ENCODE measurements at regions of chr5 and their contacts with region 1.

Region 1: DNA sequence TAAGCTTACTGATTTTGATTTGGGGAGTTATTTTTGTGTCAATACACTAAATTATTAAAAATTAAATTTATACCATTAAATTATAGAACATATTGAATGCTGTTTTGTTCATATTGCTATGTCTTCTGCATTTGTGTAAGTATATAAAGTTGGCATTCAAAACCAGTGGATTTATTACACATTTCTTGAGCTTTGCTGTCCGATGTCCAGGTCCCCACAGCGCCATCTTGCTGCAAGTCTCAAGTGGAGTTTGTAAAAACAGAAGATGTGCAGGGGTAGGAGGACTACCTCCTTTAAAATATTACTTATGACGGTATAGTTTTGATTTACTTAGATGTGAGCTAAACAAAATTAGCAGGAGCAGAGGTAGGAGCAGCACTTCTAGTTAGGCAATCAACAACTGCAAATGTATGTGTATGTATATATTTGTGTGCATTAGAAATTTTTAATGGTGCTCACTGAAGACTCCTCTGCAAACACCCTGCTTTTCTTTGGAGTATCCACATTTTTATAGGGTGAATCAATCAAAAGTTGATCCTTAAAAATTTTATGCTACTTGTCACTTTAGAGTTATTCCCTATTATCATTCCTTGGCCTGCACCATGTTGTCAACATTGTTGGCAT is 37.4 kb downstream of the CPEB4 start:
- DNase-seq: peak; percentile 31
- ATAC-seq: no peak
- H3K4me3 Mint-ChIP-seq: no peak overlapping the region
- H3K27ac Mint-ChIP-seq: no peak overlapping the region
- H3K4me1 Mint-ChIP-seq: peaks cover 25% of the 10 kb centered on the region
- H3K27me3 Mint-ChIP-seq: no peaks in the 10 kb centered on the region
- CTCF ChIP-seq: no peak

Region 2: GRCh38 chr5:173707392-173707791 is 218.2 kb before region 1 on chr5:
- CTCF ChIA-PET with region 1: no interaction called
- POLR2A ChIA-PET with region 1: no interaction called
- DNase-seq: no peak
- ATAC-seq: no peak
- H3K4me3 Mint-ChIP-seq: no peak overlapping the region
- H3K27ac Mint-ChIP-seq: 0 out of 2 replicates have a peak overlapping the region, but pooled peaks have one; percentile 17
- H3K4me1 Mint-ChIP-seq: peaks cover 19% of the 10 kb centered on the region
- H3K27me3 Mint-ChIP-seq: no peaks in the 10 kb centered on the region; the same call in 1 of the 2 replicates
- CTCF ChIP-seq: no peak

Region 3: DNA sequence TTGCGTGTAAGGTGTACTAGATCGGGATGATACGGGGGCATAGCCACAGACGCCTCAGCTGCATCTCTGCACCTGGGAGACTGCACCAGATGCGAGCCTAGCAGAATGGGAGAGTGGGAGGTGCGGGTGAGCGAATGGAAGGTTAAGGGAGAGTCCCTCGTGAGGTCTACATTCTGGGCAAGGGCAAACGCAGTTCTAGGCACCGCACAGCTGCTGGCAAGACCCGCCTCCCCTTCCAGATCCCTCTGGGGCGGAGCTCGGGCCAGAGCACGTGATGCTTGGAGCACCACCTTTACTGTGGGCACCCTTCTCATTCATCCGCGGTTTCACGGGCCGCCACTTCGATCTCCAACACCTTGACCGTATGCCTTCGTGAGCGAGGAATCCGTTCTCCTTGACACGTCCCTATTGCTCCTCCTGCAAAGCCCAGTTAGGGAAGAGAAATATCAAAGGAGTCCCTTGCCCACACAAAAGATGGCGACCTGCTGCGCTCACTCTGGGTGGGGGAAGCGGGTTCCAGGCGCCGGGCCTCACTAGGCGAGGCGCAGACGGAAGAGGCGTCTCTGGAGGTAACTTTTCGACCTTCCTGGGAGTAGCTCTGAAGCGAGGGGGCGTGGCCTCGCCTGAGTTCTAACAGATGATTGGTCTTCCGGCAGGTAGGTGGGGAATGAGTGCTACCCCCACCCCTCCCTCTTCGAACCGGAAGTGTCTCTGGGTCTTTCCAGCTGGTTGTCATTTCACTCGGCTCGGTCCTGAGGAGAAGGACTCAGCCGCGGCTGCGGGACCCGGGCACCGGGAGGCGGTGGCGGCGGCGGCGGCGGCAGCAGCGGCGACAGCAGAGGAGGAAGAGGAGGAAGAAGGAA is 37.7 kb before region 1 on chr5 and contains the start of gene CPEB4:
- CTCF ChIA-PET with region 1: interaction called, 19 read pairs
- POLR2A ChIA-PET with region 1: no interaction called
- DNase-seq: peak; percentile 98
- ATAC-seq: peak; percentile 96
- H3K4me3 Mint-ChIP-seq: peak within 1 kb of the TSS; percentile 94
- H3K27ac Mint-ChIP-seq: peak within 1 kb of the TSS; percentile 100
- H3K4me1 Mint-ChIP-seq: peaks cover 53% of the 10 kb centered on the region
- H3K27me3 Mint-ChIP-seq: peaks cover 3% of the 10 kb centered on the region; the same call in 1 of the 2 replicates
- CTCF ChIP-seq: no peak
- total RNA-seq, gene CPEB4: 9.1 to 12.7 TPM (median 9.2 TPM) in 3 replicates

Region 4: DNA sequence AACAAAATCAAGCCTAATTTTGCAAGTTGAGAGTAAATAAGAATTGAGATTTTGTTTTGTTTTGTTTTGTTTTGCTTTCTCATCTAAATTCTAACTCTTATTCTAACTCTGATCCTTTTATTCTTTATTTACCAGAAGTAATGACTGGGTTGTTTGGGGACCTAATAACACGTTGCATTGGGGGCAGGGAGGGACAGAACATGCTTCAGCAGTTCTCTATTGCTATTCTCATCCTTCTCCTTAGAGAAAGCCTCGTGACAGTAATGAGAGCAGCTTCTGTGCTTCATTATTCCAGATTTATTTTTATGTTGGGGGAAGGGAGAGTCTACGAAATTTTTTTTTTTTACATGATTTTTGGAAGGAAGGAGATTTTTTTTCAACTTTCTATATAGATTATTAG is 16.4 kb before region 1 on chr5:
- CTCF ChIA-PET with region 1: interaction called, 16 read pairs
- POLR2A ChIA-PET with region 1: no interaction called
- DNase-seq: no peak
- ATAC-seq: no peak
- H3K4me3 Mint-ChIP-seq: no peak overlapping the region
- H3K27ac Mint-ChIP-seq: peak overlapping the region; percentile 67
- H3K4me1 Mint-ChIP-seq: peaks cover 47% of the 10 kb centered on the region
- H3K27me3 Mint-ChIP-seq: no peaks in the 10 kb centered on the region
- CTCF ChIP-seq: no peak

Region 5: DNA sequence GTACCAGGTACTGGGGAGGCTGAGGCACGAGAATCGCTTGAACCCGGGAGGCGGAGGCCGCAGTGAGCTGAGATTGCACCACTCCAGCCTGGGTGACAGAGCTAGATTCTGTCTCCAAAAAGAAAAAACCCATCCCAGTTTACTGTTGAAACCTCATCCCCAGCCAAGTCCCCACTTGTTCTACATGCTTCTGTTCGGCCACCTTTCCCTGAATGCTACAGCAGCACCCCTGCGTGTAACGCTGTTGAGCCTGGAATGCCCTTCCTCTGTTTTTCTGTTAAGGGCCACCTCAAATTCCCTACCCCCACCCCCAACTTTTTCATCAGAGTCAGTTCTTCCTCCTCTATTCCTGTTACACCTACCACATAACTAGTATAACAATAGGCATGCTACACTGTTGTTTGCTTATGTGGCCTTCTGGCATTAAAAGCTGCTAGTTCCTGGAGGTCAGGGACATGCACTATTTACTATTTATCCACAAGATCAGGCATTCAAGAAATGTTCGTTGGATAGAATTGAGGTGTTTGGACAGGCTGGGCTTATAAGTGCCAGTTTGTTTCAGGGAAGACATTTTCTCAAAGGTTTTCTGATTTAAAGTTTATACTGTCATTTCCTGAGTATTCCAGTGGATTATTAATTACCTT is 16.3 kb after region 1 on chr5:
- CTCF ChIA-PET with region 1: interaction called, 35 read pairs
- POLR2A ChIA-PET with region 1: no interaction called
- DNase-seq: peak; percentile 32
- ATAC-seq: peak; percentile 88
- H3K4me3 Mint-ChIP-seq: peak overlapping the region; percentile 32; the same call in 1 of the 2 replicates
- H3K27ac Mint-ChIP-seq: peak overlapping the region; percentile 97
- H3K4me1 Mint-ChIP-seq: peaks cover 51% of the 10 kb centered on the region
- H3K27me3 Mint-ChIP-seq: no peaks in the 10 kb centered on the region
- CTCF ChIP-seq: no peak

Region 6: DNA sequence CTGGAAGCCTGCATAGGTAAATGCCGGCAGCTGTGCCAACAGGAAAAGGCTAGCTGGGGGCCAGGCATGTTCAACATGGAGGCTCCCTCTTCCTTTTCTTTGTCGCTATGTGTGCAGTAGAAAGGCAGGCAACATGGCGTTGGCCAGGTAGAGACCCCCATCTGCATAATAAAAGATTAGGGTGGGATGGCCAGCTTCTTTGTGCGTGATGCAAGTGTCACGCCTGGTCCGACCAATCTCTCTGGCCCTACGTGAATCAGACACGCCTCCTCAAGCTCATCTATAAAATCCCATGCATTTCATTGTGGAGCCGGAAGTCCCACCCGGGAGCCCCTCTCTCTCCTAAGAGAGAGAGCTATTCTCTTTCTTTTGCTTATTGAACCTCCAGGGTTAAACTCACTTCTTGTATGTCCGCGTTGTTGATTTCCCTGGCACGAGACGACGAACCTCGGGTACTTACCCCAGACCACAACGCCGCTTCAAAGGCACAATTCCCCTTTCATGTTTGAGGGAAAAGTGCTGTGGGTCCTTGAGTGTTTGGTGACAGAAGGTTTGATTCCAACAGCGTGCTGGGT is 38.4 kb after region 1 on chr5:
- CTCF ChIA-PET with region 1: interaction called, 18 read pairs
- POLR2A ChIA-PET with region 1: no interaction called
- DNase-seq: peak; percentile 61
- ATAC-seq: peak; percentile 83
- H3K4me3 Mint-ChIP-seq: peak overlapping the region; percentile 41; the same call in 1 of the 2 replicates
- H3K27ac Mint-ChIP-seq: peak overlapping the region; percentile 90
- H3K4me1 Mint-ChIP-seq: peaks cover 48% of the 10 kb centered on the region
- H3K27me3 Mint-ChIP-seq: no peaks in the 10 kb centered on the region
- CTCF ChIP-seq: no peak